ENCODE measurements at regions of chr3 and their contacts with region 1.

Region 1: GRCh38 chr3:79086514-79086913 is 681.3 kb downstream of the ROBO1 start:
- DNase-seq: peak in 1 of 2 donors; percentile 9
- ATAC-seq: peak in 3 of 4 donors; percentile 53 to 68 (median 57)
- H3K4me3 ChIP-seq: no peak overlapping the region
- H3K27ac ChIP-seq: no peak overlapping the region
- H3K4me1 ChIP-seq: no peaks in the 10 kb centered on the region
- H3K27me3 ChIP-seq: no peaks in the 10 kb centered on the region
- CTCF ChIP-seq: peak; percentile 67

Region 2: GRCh38 chr3:78951339-78951945 is 135.1 kb before region 1 on chr3:
- intact Hi-C with region 1: no loop called
- DNase-seq: no peak
- ATAC-seq: no peak
- H3K4me3 ChIP-seq: no peak overlapping the region
- H3K27ac ChIP-seq: no peak overlapping the region
- H3K4me1 ChIP-seq: peaks cover 6% of the 10 kb centered on the region
- H3K27me3 ChIP-seq: no peaks in the 10 kb centered on the region
- CTCF ChIP-seq: no peak

Region 3: GRCh38 chr3:79175870-79176269 is 89.4 kb after region 1 on chr3:
- intact Hi-C with region 1: no loop called
- DNase-seq: no peak
- ATAC-seq: no peak
- H3K4me3 ChIP-seq: no peak overlapping the region
- H3K27ac ChIP-seq: no peak overlapping the region
- H3K4me1 ChIP-seq: no peaks in the 10 kb centered on the region
- H3K27me3 ChIP-seq: no peaks in the 10 kb centered on the region
- CTCF ChIP-seq: no peak

Region 4: GRCh38 chr3:79351699-79352098 is 265.2 kb after region 1 on chr3:
- intact Hi-C with region 1: no loop called
- DNase-seq: no peak
- ATAC-seq: no peak
- H3K4me3 ChIP-seq: no peak overlapping the region
- H3K27ac ChIP-seq: no peak overlapping the region
- H3K4me1 ChIP-seq: no peaks in the 10 kb centered on the region
- H3K27me3 ChIP-seq: no peaks in the 10 kb centered on the region
- CTCF ChIP-seq: no peak

Region 5: GRCh38 chr3:79361748-79362378 is 275.3 kb after region 1 on chr3:
- intact Hi-C with region 1: loop called (anchors 10 kb)
- DNase-seq: no peak
- ATAC-seq: peak in 1 of 4 donors; percentile 36
- H3K4me3 ChIP-seq: no peak overlapping the region
- H3K27ac ChIP-seq: no peak overlapping the region
- H3K4me1 ChIP-seq: no peaks in the 10 kb centered on the region
- H3K27me3 ChIP-seq: no peaks in the 10 kb centered on the region
- CTCF ChIP-seq: peak; percentile 64

Region 6: GRCh38 chr3:79497447-79498111 is 411.1 kb after region 1 on chr3:
- intact Hi-C with region 1: loop called in 1 of 2 experiments (anchors 10 kb)
- DNase-seq: no peak
- ATAC-seq: no peak
- H3K4me3 ChIP-seq: no peak overlapping the region
- H3K27ac ChIP-seq: no peak overlapping the region
- H3K4me1 ChIP-seq: no peaks in the 10 kb centered on the region
- H3K27me3 ChIP-seq: no peaks in the 10 kb centered on the region
- CTCF ChIP-seq: peak; percentile 63

Measured in psoas muscle (tissue), 8 donors.